ENCODE measurements at regions of chr18 and their contacts with region 1.

Region 1: GRCh38 chr18:23503038-23503962 is at the start of gene RMC1:
- DNase-seq: peak; percentile 94 to 98
- H3K4me3 ChIP-seq: peak within 1 kb of the TSS; percentile 82 to 97 (median 97)
- H3K27ac ChIP-seq: peak within 1 kb of the TSS; percentile 89 to 94
- H3K4me1 ChIP-seq: peaks cover 0 to 6% of the 10 kb centered on the region in 2 donors
- H3K27me3 ChIP-seq: no peaks in the 10 kb centered on the region
- CTCF ChIP-seq: peak in 1 of 3 donors; percentile 11
- POLR2A ChIP-seq: peak; percentile 82
- total RNA-seq, gene RMC1: 22.2 to 33.0 (median 23.9) TPM

Region 2: DNA sequence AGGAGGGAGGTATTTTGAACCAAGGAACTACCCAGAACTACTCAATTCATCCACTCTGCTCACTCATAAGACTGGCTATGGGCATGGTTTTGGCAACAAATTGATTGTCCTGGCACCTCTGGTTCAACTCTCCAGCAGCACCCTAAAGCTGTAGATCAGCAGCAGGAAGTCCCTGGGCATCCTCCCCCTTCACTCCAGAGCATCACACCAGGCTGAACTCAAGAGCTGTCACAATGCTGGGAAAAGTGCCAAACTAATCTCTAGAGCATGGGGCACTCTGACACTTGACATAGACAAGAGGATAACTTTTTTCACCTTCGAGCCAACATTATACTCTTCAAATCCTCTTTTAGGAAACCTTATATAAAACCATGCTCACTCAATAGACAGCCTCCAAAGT is 724.3 kb before region 1 on chr18:
- intact Hi-C with region 1: loop called (anchors 10 kb)
- DNase-seq: no peak
- H3K4me3 ChIP-seq: no peak overlapping the region
- H3K27ac ChIP-seq: no peak overlapping the region
- H3K4me1 ChIP-seq: no peaks in the 10 kb centered on the region
- H3K27me3 ChIP-seq: no peaks in the 10 kb centered on the region
- CTCF ChIP-seq: no peak
- POLR2A ChIP-seq: no peak

Region 3: GRCh38 chr18:22952525-22952924 is 550.8 kb before region 1 on chr18:
- intact Hi-C with region 1: no loop called
- DNase-seq: no peak
- H3K4me3 ChIP-seq: no peak overlapping the region
- H3K27ac ChIP-seq: no peak overlapping the region
- H3K4me1 ChIP-seq: peaks cover 0 to 5% of the 10 kb centered on the region in 2 donors
- H3K27me3 ChIP-seq: no peaks in the 10 kb centered on the region
- CTCF ChIP-seq: no peak
- POLR2A ChIP-seq: no peak

Region 4: DNA sequence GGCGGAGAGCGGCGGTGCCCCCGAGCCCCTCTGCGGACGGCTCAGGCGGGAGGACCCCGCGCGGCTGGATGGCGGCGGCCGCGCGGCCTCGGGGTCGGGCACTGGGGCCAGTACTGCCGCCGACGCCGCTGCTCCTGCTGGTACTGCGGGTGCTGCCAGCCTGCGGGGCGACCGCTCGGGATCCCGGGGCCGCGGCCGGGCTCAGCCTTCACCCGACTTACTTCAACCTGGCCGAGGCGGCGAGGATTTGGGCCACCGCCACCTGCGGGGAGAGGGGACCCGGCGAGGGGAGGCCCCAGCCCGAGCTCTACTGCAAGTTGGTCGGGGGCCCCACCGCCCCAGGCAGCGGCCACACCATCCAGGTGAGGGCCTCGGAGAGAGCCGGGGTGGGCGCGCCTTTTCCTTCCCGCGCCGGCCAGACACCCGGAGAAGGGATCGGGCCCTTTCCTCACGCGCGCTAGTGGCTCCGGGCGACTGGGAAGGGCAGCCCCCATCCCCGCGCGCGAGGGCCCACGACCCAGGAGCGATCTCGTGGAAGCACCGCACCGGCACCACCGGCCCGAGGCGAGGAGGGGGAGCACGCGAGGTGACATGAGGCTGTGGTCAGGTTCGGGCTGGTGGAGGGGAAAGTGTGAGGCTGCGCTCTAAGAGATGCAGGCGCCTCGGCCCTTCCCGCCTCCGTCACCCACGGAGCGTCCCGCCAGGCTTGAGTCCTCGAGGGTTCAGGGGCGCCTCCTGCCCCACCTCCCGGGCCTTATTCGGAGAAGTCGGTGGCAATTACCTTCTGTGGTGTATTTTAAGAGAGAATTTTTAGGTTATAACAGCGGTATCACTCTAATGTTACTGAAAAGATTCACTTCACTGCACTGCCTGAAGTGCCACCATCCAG is 186.6 kb after region 1 on chr18:
- intact Hi-C with region 1: loop called (anchors 10 kb)
- DNase-seq: peak in 1 of 2 donors; percentile 56
- H3K4me3 ChIP-seq: peak overlapping the region; percentile 61 to 82 (median 66)
- H3K27ac ChIP-seq: peak overlapping the region; percentile 66 to 85
- H3K4me1 ChIP-seq: peaks cover 0 to 5% of the 10 kb centered on the region in 2 donors
- H3K27me3 ChIP-seq: no peaks in the 10 kb centered on the region
- CTCF ChIP-seq: no peak
- POLR2A ChIP-seq: no peak

Measured in breast epithelium (tissue), 4 donors.